ENCODE measurements at regions of chr7 and their contacts with region 1.

Region 1: DNA sequence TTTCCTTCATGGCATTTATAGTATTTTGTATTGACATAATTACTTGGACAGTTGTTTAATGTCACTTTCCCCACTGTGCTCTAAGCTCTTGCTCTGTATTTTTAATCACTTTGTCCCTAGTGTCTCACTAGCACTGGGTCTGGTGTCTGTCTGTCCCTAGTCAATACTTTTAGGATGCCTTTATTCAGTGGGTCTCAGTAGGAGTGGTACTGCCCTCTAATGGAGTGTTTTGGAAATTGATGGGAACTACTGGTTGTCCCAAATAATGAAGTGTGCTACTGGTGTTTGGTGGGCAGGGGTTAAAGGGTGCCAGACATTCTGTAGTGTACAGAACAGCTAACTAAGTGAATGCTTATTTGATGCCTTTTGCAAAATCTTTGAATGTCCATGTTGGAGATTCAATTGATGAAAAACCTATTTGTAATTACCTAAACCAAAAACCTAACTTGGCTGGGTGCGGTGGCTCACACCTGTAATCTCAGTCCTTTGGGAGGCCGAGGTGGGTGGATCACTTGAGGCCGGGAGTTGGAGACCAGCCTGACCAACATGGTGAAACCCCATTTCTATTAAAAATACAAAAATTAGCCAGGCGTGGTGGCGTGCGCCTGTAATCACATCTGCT is 33.3 kb downstream of the CDK14 start:
- DNase-seq: peak; percentile 57
- CTCF ChIP-seq: peak; percentile 66

Region 2: DNA sequence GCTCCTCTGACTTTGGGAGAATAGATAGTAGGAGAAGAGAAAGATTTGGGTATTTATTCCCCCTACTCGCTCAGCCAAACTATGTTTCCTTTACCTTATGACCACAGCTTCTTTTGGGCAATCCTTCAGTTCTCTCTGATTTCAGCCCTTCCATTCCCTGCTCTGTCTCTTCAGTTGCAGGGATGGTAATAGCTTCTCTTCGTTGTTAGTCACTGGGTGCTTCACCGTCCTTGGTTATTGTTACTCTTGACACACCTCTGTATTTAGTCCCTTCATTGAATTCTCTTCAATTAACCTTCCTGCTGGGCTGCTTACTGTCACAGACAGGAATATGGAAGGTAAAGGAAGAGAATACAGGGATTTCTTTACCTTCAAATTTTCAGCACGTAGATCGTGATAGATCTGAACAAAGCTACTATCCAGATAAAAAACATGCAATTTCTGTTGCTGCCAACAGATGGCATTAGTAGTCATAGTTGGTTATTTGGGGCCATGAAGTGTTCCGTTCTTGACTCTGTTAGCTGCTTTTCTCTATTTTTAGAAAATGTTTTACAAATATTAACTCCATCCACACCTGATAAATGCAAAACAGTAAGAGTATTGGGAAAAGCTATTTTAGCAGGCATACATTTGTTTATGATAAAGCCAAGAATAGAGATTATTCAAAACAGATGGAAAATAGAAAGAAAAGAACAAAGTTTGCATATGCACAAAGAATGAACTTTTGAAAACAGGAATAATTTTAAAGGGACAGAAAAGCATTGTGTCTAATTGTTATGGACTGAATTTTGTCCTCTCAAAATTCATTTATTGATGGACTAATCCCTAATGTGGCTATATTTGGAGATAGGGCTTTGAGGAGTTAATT is 174.0 kb before region 1 on chr7:
- CTCF ChIA-PET with region 1: interaction called, 17 read pairs
- POLR2A ChIA-PET with region 1: no interaction called
- DNase-seq: peak; percentile 48
- CTCF ChIP-seq: peak; percentile 65

Region 3: DNA sequence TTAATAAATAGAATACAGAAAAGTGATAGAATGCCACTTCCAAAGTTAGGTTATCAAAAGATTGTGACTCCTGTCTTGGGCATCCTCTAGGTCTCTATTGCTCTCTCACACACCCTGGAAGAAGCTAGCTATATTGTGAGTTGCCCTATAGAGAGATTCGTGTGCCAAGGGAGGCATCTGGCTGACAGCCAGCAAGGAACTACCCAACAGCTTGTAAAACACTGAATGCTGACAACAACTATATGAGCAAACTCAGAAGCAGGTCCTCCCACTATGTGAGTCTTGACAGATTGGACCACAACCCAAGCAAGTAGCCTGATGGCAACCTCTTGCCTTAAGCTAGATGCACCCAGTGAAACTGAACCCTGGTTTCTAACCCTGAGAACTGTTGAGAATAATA is 89.0 kb before region 1 on chr7:
- CTCF ChIA-PET with region 1: no interaction called
- POLR2A ChIA-PET with region 1: no interaction called
- DNase-seq: no peak
- CTCF ChIP-seq: no peak

Region 4: DNA sequence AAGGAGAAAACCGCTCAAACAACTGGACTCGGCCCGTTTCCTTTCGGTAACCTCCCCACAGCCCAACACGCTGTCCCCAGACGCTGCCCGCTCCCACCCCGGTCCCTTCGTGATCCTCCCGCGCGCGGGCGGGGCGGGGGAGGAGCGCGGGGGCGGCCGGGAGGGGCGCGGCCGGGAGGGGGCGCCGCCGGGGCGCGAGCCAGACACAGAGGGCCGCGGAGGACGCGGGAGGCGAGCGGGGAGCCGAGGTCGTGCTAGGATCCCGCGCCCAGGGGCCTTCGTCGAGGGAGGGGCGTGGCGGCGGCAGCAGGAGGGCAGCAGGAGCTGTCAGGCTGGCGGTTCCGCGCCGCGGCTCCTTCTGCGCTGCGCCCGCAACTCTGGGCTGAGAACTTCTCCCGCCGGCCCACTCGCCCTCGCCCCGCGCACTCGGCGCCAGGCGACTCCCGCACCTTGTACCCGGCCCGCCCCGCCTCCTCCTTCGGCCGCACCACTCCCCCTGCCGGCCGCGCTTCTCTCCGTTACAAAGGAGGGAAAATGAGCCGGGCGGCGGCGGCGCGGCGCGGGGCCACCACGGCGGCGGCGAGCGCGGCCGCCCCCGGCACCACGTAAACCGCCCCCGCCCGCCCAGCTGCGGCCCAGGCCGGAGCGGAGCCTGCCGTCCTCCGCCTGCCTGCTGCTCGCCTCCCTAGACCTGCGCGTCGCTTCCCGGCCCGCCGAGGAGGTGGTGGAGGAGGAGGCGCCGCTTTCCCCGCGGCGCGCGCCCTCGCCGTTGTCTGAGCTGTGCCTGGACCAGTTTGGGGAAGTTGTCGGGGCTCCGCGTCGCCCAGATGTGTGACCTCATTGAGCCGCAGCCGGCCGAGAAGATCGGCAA is 33.4 kb before region 1 on chr7 and contains the start of gene CDK14:
- CTCF ChIA-PET with region 1: interaction called, 13 read pairs
- POLR2A ChIA-PET with region 1: no interaction called
- DNase-seq: peak; percentile 77
- CTCF ChIP-seq: peak; percentile 50

Region 5: GRCh38 chr7:90607196-90607595 is 22.2 kb before region 1 on chr7:
- CTCF ChIA-PET with region 1: interaction called, 12 read pairs
- POLR2A ChIA-PET with region 1: no interaction called
- DNase-seq: no peak
- CTCF ChIP-seq: no peak

Region 6: GRCh38 chr7:90613088-90613498 is 16.3 kb before region 1 on chr7:
- CTCF ChIA-PET with region 1: interaction called, 12 read pairs
- POLR2A ChIA-PET with region 1: no interaction called
- DNase-seq: peak; percentile 41
- CTCF ChIP-seq: no peak

Measured in GM10248 (cell line).